ENCODE measurements at regions of chr2 and their contacts with region 1.

Region 1: GRCh38 chr2:200306196-200306930 is at the start of gene SPATS2L:
- DNase-seq: peak; percentile 63 to 76
- H3K4me3 ChIP-seq: peak within 1 kb of the TSS; percentile 86
- H3K27ac ChIP-seq: peak within 1 kb of the TSS; percentile 84
- H3K4me1 ChIP-seq: peaks cover 70% of the 10 kb centered on the region
- H3K27me3 ChIP-seq: no peaks in the 10 kb centered on the region
- CTCF ChIP-seq: 0 out of 2 replicates have a peak, but pooled peaks have one; percentile 28
- total RNA-seq, gene SPATS2L: 189 and 199 TPM in 2 replicates

Region 2: GRCh38 chr2:199985625-199986207 is 320.6 kb before region 1 on chr2:
- CTCF ChIA-PET with region 1: interaction called, 3 read pairs
- POLR2A ChIA-PET with region 1: no interaction called
- intact Hi-C with region 1: loop called (anchors 2 kb)
- DNase-seq: peak; percentile 60
- H3K4me3 ChIP-seq: no peak overlapping the region
- H3K27ac ChIP-seq: no peak overlapping the region
- H3K4me1 ChIP-seq: no peaks in the 10 kb centered on the region
- H3K27me3 ChIP-seq: no peaks in the 10 kb centered on the region
- CTCF ChIP-seq: peak; percentile 70

Region 3: GRCh38 chr2:200288658-200289427 is 17.5 kb before region 1 on chr2:
- CTCF ChIA-PET with region 1: no interaction called
- POLR2A ChIA-PET with region 1: interaction called, 22 read pairs
- intact Hi-C with region 1: no loop called
- DNase-seq: peak in 1 of 2 experiments; percentile 41
- H3K4me3 ChIP-seq: no peak overlapping the region
- H3K27ac ChIP-seq: no peak overlapping the region; the same call in 1 of the 2 replicates
- H3K4me1 ChIP-seq: peaks cover 12% of the 10 kb centered on the region
- H3K27me3 ChIP-seq: no peaks in the 10 kb centered on the region
- CTCF ChIP-seq: no peak

Region 4: GRCh38 chr2:200352636-200353035 is 46.3 kb after region 1 on chr2:
- CTCF ChIA-PET with region 1: no interaction called
- POLR2A ChIA-PET with region 1: interaction called, 12 read pairs
- intact Hi-C with region 1: loop called (anchors 2 kb)
- DNase-seq: peak; percentile 49 to 85
- H3K4me3 ChIP-seq: no peak overlapping the region
- H3K27ac ChIP-seq: peak overlapping the region; percentile 66
- H3K4me1 ChIP-seq: peaks cover 45% of the 10 kb centered on the region
- H3K27me3 ChIP-seq: no peaks in the 10 kb centered on the region
- CTCF ChIP-seq: no peak

Region 5: DNA sequence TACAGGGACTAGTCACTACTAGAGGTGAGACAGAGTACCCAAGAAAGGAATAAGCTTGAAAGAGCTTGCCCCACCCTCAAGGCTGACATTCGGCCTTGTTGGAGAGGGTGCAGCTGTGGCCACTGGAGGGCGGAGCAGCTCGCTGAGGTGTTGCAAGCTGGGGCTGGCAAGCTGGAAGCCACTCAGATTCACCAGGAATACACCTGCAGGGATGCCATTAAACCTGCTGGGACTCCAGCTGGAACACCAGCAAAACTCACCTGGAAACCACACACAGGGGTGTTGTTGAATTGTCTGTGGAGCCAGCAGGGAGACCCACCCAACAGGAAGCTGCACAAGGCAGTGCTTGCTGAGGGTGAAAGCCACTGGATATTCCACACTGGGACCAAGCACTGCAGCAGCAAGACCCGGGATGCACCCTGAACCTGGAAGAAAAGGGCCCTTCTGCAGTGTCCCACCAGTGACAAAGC is 177.4 kb after region 1 on chr2:
- CTCF ChIA-PET with region 1: interaction called, 3 read pairs
- POLR2A ChIA-PET with region 1: no interaction called
- intact Hi-C with region 1: loop called (anchors 5 kb)
- DNase-seq: peak; percentile 59 to 66
- H3K4me3 ChIP-seq: no peak overlapping the region
- H3K27ac ChIP-seq: no peak overlapping the region
- H3K4me1 ChIP-seq: peaks cover 43% of the 10 kb centered on the region
- H3K27me3 ChIP-seq: no peaks in the 10 kb centered on the region
- CTCF ChIP-seq: peak; percentile 58

Region 6: DNA sequence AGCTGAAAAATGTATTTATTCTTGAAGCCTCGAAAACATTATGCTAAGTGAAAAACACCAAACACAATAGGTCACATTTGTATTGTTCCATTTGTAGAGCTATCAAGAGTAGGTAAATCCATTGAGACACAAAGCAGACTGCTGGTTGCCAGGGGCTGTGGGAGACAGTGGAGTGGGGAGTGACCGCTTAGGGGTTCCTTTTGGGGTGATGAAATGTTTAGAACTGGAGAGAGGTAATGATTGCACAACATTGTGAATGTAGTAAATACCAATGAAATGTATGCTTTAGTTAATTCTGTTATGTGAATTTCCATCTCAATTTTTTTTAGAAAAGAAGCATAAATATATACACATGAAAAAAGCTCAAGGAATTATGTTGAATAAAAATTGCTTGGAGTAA is 187.7 kb after region 1 on chr2:
- CTCF ChIA-PET with region 1: no interaction called
- POLR2A ChIA-PET with region 1: no interaction called
- intact Hi-C with region 1: no loop called
- DNase-seq: no peak
- H3K4me3 ChIP-seq: no peak overlapping the region
- H3K27ac ChIP-seq: no peak overlapping the region
- H3K4me1 ChIP-seq: no peaks in the 10 kb centered on the region
- H3K27me3 ChIP-seq: no peaks in the 10 kb centered on the region
- CTCF ChIP-seq: no peak